IMR-90 (cell line): ENCODE measurements at regions of chr2 and their contacts with region 1.

Region 1: DNA sequence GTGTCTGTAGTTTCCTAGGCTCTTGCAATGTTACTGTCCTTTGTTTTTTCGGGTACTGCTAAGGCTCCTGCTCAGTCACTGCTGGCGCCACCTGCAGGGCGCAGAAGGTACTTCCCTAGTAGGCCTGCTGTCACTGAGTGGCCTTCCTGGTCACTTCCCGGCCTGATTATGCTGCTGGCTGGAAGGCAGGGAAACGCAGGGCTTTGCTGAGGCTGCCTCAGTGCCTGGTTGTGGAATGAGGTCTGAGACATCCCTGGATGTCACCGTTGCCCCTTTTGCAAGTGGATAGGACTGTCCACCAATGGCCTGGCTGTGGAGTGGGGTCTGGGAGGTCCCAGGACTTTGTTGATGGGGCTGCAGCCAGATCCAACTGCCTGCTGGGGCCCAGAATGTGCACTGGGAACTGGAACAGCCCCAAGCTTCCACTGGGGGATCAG is 13.1 kb downstream of the DAW1 start:
- DNase-seq: peak; percentile 72
- ATAC-seq: peak; percentile 99
- H3K4me3 ChIP-seq: no peak overlapping the region
- H3K27ac ChIP-seq: no peak overlapping the region
- H3K4me1 ChIP-seq: 0 out of 2 replicates have a peak, but pooled peaks cover 1% of the 10 kb centered on the region
- H3K27me3 ChIP-seq: no peaks in the 10 kb centered on the region
- CTCF ChIP-seq: peak; percentile 76
- POLR2A ChIP-seq: no peak
- RAD21 ChIP-seq: peak; percentile 65

Region 2: GRCh38 chr2:227132986-227133385 is 751.5 kb before region 1 on chr2:
- CTCF ChIA-PET with region 1: no interaction called
- POLR2A ChIA-PET with region 1: no interaction called
- dilution Hi-C with region 1: no loop called
- in situ Hi-C with region 1: no loop called
- intact Hi-C with region 1: loop called (anchors 1 kb)
- DNase-seq: no peak
- ATAC-seq: no peak
- H3K4me3 ChIP-seq: no peak overlapping the region
- H3K27ac ChIP-seq: no peak overlapping the region
- H3K4me1 ChIP-seq: no peaks in the 10 kb centered on the region
- H3K27me3 ChIP-seq: peaks cover 38% of the 10 kb centered on the region
- CTCF ChIP-seq: no peak
- POLR2A ChIP-seq: no peak
- RAD21 ChIP-seq: no peak

Region 3: GRCh38 chr2:227655454-227655853 is 229.1 kb before region 1 on chr2:
- CTCF ChIA-PET with region 1: no interaction called
- POLR2A ChIA-PET with region 1: no interaction called
- dilution Hi-C with region 1: no loop called
- in situ Hi-C with region 1: loop called (anchors 10 kb)
- intact Hi-C with region 1: loop called (anchors 1 kb)
- DNase-seq: peak; percentile 91
- ATAC-seq: peak; percentile 81
- H3K4me3 ChIP-seq: no peak overlapping the region
- H3K27ac ChIP-seq: no peak overlapping the region
- H3K4me1 ChIP-seq: no peaks in the 10 kb centered on the region
- H3K27me3 ChIP-seq: no peaks in the 10 kb centered on the region
- CTCF ChIP-seq: no peak
- POLR2A ChIP-seq: no peak
- RAD21 ChIP-seq: no peak

Region 4: GRCh38 chr2:227661019-227661649 is 223.4 kb before region 1 on chr2:
- CTCF ChIA-PET with region 1: no interaction called
- POLR2A ChIA-PET with region 1: no interaction called
- dilution Hi-C with region 1: no loop called
- in situ Hi-C with region 1: loop called (anchors 10 kb)
- intact Hi-C with region 1: loop called (anchors 1 kb)
- DNase-seq: no peak
- ATAC-seq: no peak
- H3K4me3 ChIP-seq: no peak overlapping the region
- H3K27ac ChIP-seq: no peak overlapping the region
- H3K4me1 ChIP-seq: no peaks in the 10 kb centered on the region
- H3K27me3 ChIP-seq: peaks cover 4% of the 10 kb centered on the region
- CTCF ChIP-seq: no peak
- POLR2A ChIP-seq: no peak
- RAD21 ChIP-seq: no peak

Region 5: GRCh38 chr2:227817850-227818674 is 66.5 kb before region 1 on chr2:
- CTCF ChIA-PET with region 1: no interaction called
- POLR2A ChIA-PET with region 1: no interaction called
- dilution Hi-C with region 1: no loop called
- in situ Hi-C with region 1: no loop called
- intact Hi-C with region 1: loop called (anchors 2 kb)
- DNase-seq: peak; percentile 100
- ATAC-seq: peak; percentile 89
- H3K4me3 ChIP-seq: peak overlapping the region; percentile 2; the same call in 1 of the 2 replicates
- H3K27ac ChIP-seq: peak overlapping the region; percentile 18
- H3K4me1 ChIP-seq: peaks cover 3% of the 10 kb centered on the region; the same call in 1 of the 2 replicates
- H3K27me3 ChIP-seq: no peaks in the 10 kb centered on the region
- CTCF ChIP-seq: 0 out of 2 replicates have a peak, but pooled peaks have one; percentile 16
- POLR2A ChIP-seq: peak; percentile 32; the same call in 1 of the 2 replicates
- RAD21 ChIP-seq: no peak

Region 6: DNA sequence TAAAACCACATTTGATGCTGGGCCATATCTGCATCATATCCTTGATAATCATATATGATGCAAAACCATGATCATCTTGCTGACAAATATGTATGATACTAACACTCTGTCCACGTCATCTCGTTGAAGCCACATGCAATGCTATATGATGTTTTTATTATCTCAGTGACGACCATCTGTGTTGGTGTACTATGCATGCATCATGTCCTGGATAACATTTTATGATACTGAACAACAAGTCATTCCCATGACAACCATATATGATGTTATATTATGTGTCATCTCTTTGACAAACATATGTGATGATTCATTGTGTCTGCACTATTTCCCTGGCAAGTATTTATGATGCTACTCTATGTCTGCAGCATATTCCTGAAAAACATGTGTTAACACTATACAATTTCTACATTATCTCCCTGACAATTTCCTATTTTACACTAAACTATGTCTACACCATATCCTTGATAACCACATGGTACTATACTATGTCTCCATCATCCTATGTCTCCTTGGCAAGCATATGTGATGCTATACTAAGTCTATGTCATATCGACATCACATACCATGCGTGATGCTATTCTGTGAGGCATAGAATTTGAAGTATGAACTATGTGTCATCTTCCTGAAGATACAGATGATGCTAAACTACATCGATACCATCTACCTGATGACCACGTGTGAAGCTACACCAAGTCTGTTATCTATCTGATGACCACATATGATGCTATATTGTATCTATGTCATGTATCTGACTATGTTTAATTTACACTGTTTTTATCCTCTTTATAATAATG is 23.9 kb after region 1 on chr2:
- CTCF ChIA-PET with region 1: no interaction called
- POLR2A ChIA-PET with region 1: no interaction called
- dilution Hi-C with region 1: no loop called
- in situ Hi-C with region 1: no loop called
- intact Hi-C with region 1: no loop called
- DNase-seq: peak; percentile 46
- ATAC-seq: no peak
- H3K4me3 ChIP-seq: no peak overlapping the region
- H3K27ac ChIP-seq: no peak overlapping the region
- H3K4me1 ChIP-seq: no peaks in the 10 kb centered on the region
- H3K27me3 ChIP-seq: no peaks in the 10 kb centered on the region
- CTCF ChIP-seq: no peak
- POLR2A ChIP-seq: no peak
- RAD21 ChIP-seq: no peak

Region 7: DNA sequence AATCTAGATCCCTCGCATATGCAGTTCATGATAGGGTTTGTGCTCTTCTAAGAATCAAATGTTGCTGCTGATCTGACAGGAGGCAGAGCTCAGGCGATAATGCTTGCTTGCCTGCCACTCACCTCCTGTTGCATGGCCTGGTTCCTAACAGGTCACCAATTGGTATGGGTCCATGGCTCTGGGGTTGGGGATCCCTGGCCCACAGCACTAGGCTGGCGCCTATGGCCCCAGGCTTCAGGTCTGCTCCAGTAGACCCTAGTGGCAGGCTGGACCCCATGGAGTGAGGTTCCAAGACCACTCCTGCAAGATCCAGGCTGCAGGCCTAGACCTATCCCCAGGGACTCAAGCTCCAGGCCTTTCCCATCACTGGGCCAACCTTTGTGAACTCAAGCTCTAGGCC is 194.7 kb after region 1 on chr2:
- CTCF ChIA-PET with region 1: no interaction called
- POLR2A ChIA-PET with region 1: no interaction called
- dilution Hi-C with region 1: no loop called
- in situ Hi-C with region 1: no loop called
- intact Hi-C with region 1: no loop called
- DNase-seq: no peak
- ATAC-seq: no peak
- H3K4me3 ChIP-seq: no peak overlapping the region
- H3K27ac ChIP-seq: no peak overlapping the region
- H3K4me1 ChIP-seq: no peaks in the 10 kb centered on the region
- H3K27me3 ChIP-seq: no peaks in the 10 kb centered on the region
- CTCF ChIP-seq: no peak
- POLR2A ChIP-seq: no peak
- RAD21 ChIP-seq: no peak

Region 8: DNA sequence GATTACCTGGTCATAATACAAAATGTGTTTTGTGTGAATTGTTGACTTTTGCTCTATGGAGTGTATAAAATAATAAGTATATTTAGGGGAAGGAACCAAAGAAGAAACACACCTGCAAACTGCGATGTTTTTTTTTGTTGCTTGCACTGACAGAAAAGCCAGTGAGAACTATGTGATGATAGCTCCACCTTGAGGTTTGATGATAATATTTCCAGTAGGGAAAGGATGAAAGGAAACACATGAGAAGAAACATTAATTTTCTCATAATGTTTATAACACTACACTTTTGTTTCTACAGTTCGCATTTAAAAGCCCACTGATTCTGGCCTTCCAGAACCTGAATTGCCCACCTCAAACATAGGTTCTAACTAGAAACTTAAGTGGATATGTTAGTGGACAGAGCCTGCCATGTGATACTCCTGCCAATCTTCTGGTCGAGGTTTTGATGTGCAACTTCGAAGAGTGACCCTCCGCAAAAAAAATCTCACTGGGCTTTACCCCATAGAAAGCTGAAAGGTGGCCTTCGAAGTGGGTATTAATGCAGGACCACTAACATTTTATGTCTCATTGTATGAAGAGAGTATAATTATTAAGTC is 773.4 kb after region 1 on chr2:
- CTCF ChIA-PET with region 1: no interaction called
- POLR2A ChIA-PET with region 1: no interaction called
- dilution Hi-C with region 1: no loop called
- in situ Hi-C with region 1: loop called (anchors 25 kb)
- intact Hi-C with region 1: no loop called
- DNase-seq: peak; percentile 46
- ATAC-seq: peak; percentile 21; the same call in 1 of the 2 replicates
- H3K4me3 ChIP-seq: no peak overlapping the region
- H3K27ac ChIP-seq: no peak overlapping the region
- H3K4me1 ChIP-seq: no peaks in the 10 kb centered on the region
- H3K27me3 ChIP-seq: no peaks in the 10 kb centered on the region
- CTCF ChIP-seq: peak; percentile 51
- POLR2A ChIP-seq: no peak
- RAD21 ChIP-seq: peak; percentile 67